ENCODE measurements at regions of chr12 and their contacts with region 1.

Region 1: DNA sequence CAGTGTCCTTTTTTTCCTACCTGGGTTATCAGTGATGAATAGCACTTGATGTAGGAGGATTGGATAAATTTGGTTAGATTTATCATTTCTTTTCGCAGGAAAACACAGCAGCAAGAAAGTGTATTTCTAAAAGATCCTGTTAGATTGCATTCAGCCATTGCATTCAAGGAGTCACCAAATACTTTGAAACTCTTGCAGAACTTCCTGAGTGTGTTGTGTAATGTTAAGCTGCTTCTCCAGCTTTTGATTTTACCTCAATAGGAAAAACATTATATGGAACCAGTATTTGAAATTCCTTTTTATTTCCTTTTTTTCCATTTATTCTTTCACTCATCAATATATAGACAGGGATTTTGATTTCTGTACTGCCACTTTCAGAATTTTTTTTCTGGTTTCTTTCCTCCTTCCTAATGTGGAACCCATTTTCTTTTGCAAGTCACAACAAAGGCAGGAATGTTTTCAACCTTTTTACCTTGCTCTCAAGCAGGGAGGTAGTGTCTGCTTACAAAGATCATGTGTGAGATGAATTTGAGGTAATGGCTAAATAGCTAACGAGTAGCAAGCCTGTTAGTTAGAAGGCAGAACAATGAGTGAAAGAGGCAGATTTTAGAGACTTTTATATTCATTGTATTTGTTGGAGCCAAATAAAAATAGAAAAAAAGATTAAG is 56.2 kb downstream of the PPHLN1 start:
- DNase-seq: no peak
- H3K4me3 ChIP-seq: no peak overlapping the region
- H3K27ac ChIP-seq: no peak overlapping the region
- H3K4me1 ChIP-seq: no peaks in the 10 kb centered on the region
- H3K27me3 ChIP-seq: no peaks in the 10 kb centered on the region
- CTCF ChIP-seq: no peak

Region 2: GRCh38 chr12:42144408-42145196 is 237.5 kb before region 1 on chr12 and contains the start of gene GXYLT1:
- CTCF ChIA-PET with region 1: no interaction called
- POLR2A ChIA-PET with region 1: no interaction called
- intact Hi-C with region 1: no loop called
- DNase-seq: peak; percentile 83 to 94
- H3K4me3 ChIP-seq: peak within 1 kb of the TSS; percentile 99
- H3K27ac ChIP-seq: peak within 1 kb of the TSS; percentile 70
- H3K4me1 ChIP-seq: peaks cover 22% of the 10 kb centered on the region
- H3K27me3 ChIP-seq: no peaks in the 10 kb centered on the region
- CTCF ChIP-seq: no peak
- total RNA-seq, gene GXYLT1: 7.8 TPM in 2 replicates

Region 3: GRCh38 chr12:43370260-43370659 is 988.1 kb after region 1 on chr12:
- CTCF ChIA-PET with region 1: no interaction called
- POLR2A ChIA-PET with region 1: interaction called, 10 read pairs
- intact Hi-C with region 1: no loop called
- DNase-seq: peak in 1 of 2 experiments; percentile 74
- H3K4me3 ChIP-seq: no peak overlapping the region
- H3K27ac ChIP-seq: peak overlapping the region; percentile 48
- H3K4me1 ChIP-seq: peaks cover 9% of the 10 kb centered on the region
- H3K27me3 ChIP-seq: no peaks in the 10 kb centered on the region
- CTCF ChIP-seq: no peak

Measured in PC-9 (cell line).